Spleen (tissue), 13 donors: ENCODE measurements at regions of chr12 and their contacts with region 1.

Region 1: GRCh38 chr12:15522565-15523187 is 200.4 kb downstream of the PTPRO start:
- DNase-seq: no peak
- H3K4me3 ChIP-seq: no peak overlapping the region
- H3K27ac ChIP-seq: no peak overlapping the region
- H3K4me1 ChIP-seq: peaks cover 0 to 6% (median 0%) of the 10 kb centered on the region in 6 donors
- H3K27me3 ChIP-seq: peaks cover 0 to 13% (median 0%) of the 10 kb centered on the region in 7 donors
- CTCF ChIP-seq: peak in 10 of 11 experiments; percentile 20 to 63 (median 46)
- POLR2A ChIP-seq: no peak

Region 2: DNA sequence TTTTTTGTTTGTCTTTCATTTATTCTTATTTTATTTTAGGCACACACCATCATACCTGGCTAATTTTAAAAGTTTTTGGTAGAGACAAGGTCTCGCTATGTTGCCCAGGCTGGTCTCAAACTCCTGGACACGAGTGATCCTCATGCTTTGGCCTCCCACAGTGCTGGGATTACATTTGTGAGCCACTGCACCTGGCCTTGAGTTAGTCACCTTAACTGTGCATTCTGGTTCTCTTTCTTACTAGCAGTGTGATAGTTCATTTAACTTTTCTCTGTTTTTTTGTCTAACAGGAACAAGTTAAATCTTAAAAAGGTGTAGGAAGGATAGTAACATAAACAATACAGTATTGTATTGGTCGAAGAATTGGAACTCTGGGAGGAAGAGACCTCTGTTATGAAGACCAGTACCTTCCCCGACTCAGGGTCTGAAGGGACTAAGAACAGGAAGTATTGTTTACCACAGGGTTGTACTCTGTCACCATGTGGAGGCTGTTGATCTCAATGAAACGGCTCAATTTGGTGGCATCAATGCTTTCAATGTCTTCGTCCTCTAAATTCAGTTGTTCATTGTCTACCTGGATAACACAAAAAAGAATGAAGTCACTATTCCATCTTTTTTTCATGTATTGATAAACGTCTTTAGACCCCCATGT is 602.1 kb before region 1 on chr12:
- intact Hi-C with region 1: no loop called
- DNase-seq: no peak
- H3K4me3 ChIP-seq: no peak overlapping the region
- H3K27ac ChIP-seq: peak overlapping the region in 1 of 8 donors; percentile 49
- H3K4me1 ChIP-seq: peaks cover 0 to 9% (median 0%) of the 10 kb centered on the region in 6 donors
- H3K27me3 ChIP-seq: no peaks in the 10 kb centered on the region
- CTCF ChIP-seq: no peak
- POLR2A ChIP-seq: no peak

Region 3: GRCh38 chr12:15276088-15276698 is 246.5 kb before region 1 on chr12:
- intact Hi-C with region 1: loop called (anchors 5 kb)
- DNase-seq: no peak
- H3K4me3 ChIP-seq: no peak overlapping the region
- H3K27ac ChIP-seq: no peak overlapping the region
- H3K4me1 ChIP-seq: peaks cover 0 to 15% (median 9%) of the 10 kb centered on the region in 6 donors
- H3K27me3 ChIP-seq: peaks cover 0 to 6% (median 0%) of the 10 kb centered on the region in 7 donors
- CTCF ChIP-seq: peak in 9 of 11 experiments; percentile 40 to 68 (median 51)
- POLR2A ChIP-seq: no peak

Region 4: GRCh38 chr12:15341371-15341770 is 181.3 kb before region 1 on chr12:
- intact Hi-C with region 1: no loop called
- DNase-seq: no peak
- H3K4me3 ChIP-seq: no peak overlapping the region
- H3K27ac ChIP-seq: no peak overlapping the region
- H3K4me1 ChIP-seq: no peaks in the 10 kb centered on the region
- H3K27me3 ChIP-seq: peaks cover 0 to 23% (median 0%) of the 10 kb centered on the region in 7 donors
- CTCF ChIP-seq: no peak
- POLR2A ChIP-seq: no peak

Region 5: GRCh38 chr12:15488481-15488880 is 34.2 kb before region 1 on chr12:
- intact Hi-C with region 1: no loop called
- DNase-seq: no peak
- H3K4me3 ChIP-seq: no peak overlapping the region
- H3K27ac ChIP-seq: no peak overlapping the region
- H3K4me1 ChIP-seq: no peaks in the 10 kb centered on the region
- H3K27me3 ChIP-seq: peaks cover 0 to 15% (median 0%) of the 10 kb centered on the region in 7 donors
- CTCF ChIP-seq: no peak
- POLR2A ChIP-seq: no peak